Activated B cell treated with CpG ODN at 0.5 μM for 24 hours (primary cell): ENCODE measurements at regions of chr6 and their contacts with region 1.

Region 1: GRCh38 chr6:39361657-39362486 is 39.4 kb upstream of the KCNK16 start:
- DNase-seq: peak; percentile 33
- ATAC-seq: peak; percentile 75
- H3K4me3 Mint-ChIP-seq: no peak overlapping the region
- H3K27ac Mint-ChIP-seq: no peak overlapping the region
- H3K4me1 Mint-ChIP-seq: peaks cover 2% of the 10 kb centered on the region
- H3K27me3 Mint-ChIP-seq: peaks cover 7% of the 10 kb centered on the region
- CTCF ChIP-seq: no peak

Region 2: GRCh38 chr6:39189915-39190544 is 171.8 kb before region 1 on chr6:
- CTCF ChIA-PET with region 1: no interaction called
- POLR2A ChIA-PET with region 1: no interaction called
- intact Hi-C with region 1: no loop called
- DNase-seq: no peak
- ATAC-seq: no peak
- H3K4me3 Mint-ChIP-seq: no peak overlapping the region
- H3K27ac Mint-ChIP-seq: no peak overlapping the region
- H3K4me1 Mint-ChIP-seq: no peaks in the 10 kb centered on the region
- H3K27me3 Mint-ChIP-seq: peaks cover 34% of the 10 kb centered on the region
- CTCF ChIP-seq: no peak

Region 3: DNA sequence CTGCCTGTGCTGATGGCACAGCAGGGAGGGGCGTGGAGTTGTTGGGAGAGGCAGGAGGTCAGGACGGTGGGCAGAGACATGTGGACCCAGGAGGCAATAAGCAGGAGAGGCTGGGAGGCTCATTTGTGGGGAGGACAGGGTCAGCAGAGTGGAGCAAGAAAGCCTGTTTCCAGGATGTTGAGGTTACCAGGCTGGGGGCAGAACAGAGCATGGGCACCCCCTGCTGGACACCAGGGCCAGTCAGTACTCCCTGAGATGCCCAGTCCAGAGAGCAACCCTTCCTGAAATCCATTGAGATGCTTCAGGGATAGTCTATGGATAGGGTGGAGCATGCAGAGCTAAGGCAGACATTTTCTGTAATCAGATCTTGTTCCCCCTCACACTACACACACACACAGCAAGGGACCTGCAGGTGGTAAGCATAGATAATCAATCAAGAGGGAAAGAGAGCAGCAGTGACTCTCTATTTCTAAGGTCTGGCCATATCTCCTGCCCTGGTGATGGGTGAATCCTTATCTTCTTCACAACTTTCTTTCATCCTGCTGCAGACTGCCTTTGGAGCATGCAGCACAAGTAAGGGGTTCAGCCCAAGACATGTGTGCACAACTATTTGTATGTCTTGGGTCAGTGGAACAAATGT is 530.7 kb after region 1 on chr6:
- CTCF ChIA-PET with region 1: interaction called, 3 read pairs
- POLR2A ChIA-PET with region 1: no interaction called
- intact Hi-C with region 1: loop called (anchors 1 kb)
- DNase-seq: no peak
- ATAC-seq: no peak
- H3K4me3 Mint-ChIP-seq: no peak overlapping the region
- H3K27ac Mint-ChIP-seq: no peak overlapping the region
- H3K4me1 Mint-ChIP-seq: no peaks in the 10 kb centered on the region
- H3K27me3 Mint-ChIP-seq: peaks cover 10% of the 10 kb centered on the region
- CTCF ChIP-seq: no peak

Region 4: DNA sequence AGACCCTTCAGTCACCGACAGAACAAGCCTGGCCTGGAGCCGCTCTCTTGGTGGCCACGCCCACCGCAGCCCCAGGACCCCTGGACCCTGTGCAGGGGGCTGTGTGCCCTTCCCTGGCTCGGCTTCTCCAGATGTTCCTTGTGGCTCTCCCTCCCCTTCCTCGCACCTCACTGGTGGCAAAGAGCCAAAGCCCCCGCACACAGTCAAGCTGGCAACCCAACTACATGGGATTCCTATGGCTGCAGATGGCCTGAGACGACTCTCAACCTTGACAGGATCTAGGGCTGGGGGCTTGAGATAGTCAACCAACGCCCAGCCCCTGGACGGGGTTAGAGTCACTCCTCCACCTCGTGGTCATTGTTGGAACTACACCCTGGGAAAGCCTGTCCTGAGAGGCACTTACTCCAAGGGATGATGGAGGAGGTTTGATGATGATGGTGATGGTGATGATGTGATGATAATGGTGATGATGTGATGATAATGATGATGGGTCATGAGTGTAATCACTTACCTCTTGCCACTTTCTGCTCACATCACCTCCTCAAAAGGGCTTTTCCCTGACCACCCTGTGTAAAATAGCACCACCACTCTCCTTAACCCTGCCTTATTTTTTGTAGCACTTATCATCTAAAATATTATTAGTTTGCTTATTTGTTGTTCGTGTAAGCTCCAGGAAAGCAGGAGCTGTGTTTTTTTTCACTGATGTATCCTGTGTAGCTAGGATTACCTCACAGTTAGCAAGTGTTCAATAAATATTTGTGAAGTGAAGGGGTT is 946.8 kb after region 1 on chr6:
- CTCF ChIA-PET with region 1: interaction called, 5 read pairs
- POLR2A ChIA-PET with region 1: no interaction called
- intact Hi-C with region 1: loop called (anchors 1 kb)
- DNase-seq: peak; percentile 19
- ATAC-seq: no peak
- H3K4me3 Mint-ChIP-seq: no peak overlapping the region
- H3K27ac Mint-ChIP-seq: no peak overlapping the region
- H3K4me1 Mint-ChIP-seq: peaks cover 2% of the 10 kb centered on the region
- H3K27me3 Mint-ChIP-seq: peaks cover 26% of the 10 kb centered on the region
- CTCF ChIP-seq: no peak